Endothelial cell of umbilical vein (primary cell): ENCODE measurements at regions of chr1 and their contacts with region 1.

Region 1: GRCh38 chr1:25247024-25247828 is at the start of gene RSRP1:
- DNase-seq: peak; percentile 99
- H3K4me3 ChIP-seq: peak within 1 kb of the TSS; percentile 71 to 97 (median 86)
- H3K27ac ChIP-seq: peak within 1 kb of the TSS; percentile 89
- H3K4me1 ChIP-seq: peaks cover 20% of the 10 kb centered on the region
- H3K27me3 ChIP-seq: no peaks in the 10 kb centered on the region
- CTCF ChIP-seq: no peak
- POLR2A ChIP-seq: peak; percentile 100
- total RNA-seq, gene RSRP1: 99.4 and 102 TPM in 2 replicates

Region 2: GRCh38 chr1:25232027-25232865 is 15.0 kb before region 1 on chr1 and contains the start of gene SYF2:
- CTCF ChIA-PET with region 1: interaction called, 8 read pairs
- POLR2A ChIA-PET with region 1: interaction called, 28 read pairs
- dilution Hi-C with region 1: no loop called
- intact Hi-C with region 1: loop called (anchors 1 kb)
- DNase-seq: peak; percentile 89
- H3K4me3 ChIP-seq: peak within 1 kb of the TSS; percentile 64 to 88 (median 87)
- H3K27ac ChIP-seq: peak within 1 kb of the TSS; percentile 60
- H3K4me1 ChIP-seq: peaks cover 26% of the 10 kb centered on the region
- H3K27me3 ChIP-seq: no peaks in the 10 kb centered on the region
- CTCF ChIP-seq: no peak
- POLR2A ChIP-seq: peak; percentile 57
- total RNA-seq, gene SYF2: 38.0 and 40.2 TPM in 2 replicates

Region 3: DNA sequence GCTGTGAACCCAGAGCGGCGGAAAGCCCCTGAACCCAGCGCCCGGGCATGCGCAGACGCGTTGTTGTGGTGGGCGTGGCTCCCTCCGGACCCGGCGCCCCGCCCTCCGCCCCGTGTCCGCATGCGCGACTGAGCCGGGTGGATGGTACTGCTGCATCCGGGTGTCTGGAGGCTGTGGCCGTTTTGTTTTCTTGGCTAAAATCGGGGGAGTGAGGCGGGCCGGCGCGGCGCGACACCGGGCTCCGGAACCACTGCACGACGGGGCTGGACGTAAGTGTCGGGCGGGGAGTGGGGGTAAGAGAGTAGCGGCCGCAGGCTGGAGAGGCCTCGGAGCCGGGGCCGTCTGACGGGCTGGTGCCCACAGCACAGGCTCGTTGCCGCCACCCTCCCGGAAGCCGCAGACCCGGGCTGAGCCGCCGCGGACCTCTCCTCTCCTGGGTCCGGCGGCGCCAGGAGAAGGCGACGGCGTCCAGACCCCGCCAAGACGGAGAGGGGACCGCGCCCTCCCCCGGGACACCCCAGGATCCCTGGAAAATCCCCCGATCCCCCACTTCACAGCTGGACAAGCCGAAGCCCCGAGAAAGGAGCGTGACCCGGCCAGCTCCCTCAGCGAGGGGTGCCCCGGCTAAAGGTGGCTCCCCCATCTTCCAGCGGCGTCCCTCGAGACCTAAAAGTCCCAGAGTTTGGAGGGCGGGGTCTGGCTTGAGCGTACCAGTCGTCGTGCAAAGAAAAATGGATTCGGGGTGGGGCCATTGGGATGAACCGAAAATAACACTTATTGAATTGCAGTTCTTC is 91.2 kb after region 1 on chr1 and contains the start of gene TMEM50A:
- CTCF ChIA-PET with region 1: no interaction called
- POLR2A ChIA-PET with region 1: no interaction called
- dilution Hi-C with region 1: no loop called
- intact Hi-C with region 1: loop called (anchors 5 kb)
- DNase-seq: peak; percentile 93
- H3K4me3 ChIP-seq: peak within 1 kb of the TSS; percentile 74 to 97 (median 85)
- H3K27ac ChIP-seq: peak within 1 kb of the TSS; percentile 91
- H3K4me1 ChIP-seq: peaks cover 18% of the 10 kb centered on the region
- H3K27me3 ChIP-seq: no peaks in the 10 kb centered on the region
- CTCF ChIP-seq: no peak
- POLR2A ChIP-seq: peak; percentile 45
- total RNA-seq, gene TMEM50A: 130 and 140 TPM in 2 replicates

Region 4: GRCh38 chr1:25476186-25477097 is 229.2 kb after region 1 on chr1:
- CTCF ChIA-PET with region 1: no interaction called
- POLR2A ChIA-PET with region 1: no interaction called
- dilution Hi-C with region 1: no loop called
- intact Hi-C with region 1: loop called (anchors 5 kb)
- DNase-seq: no peak
- H3K4me3 ChIP-seq: no peak overlapping the region
- H3K27ac ChIP-seq: no peak overlapping the region
- H3K4me1 ChIP-seq: no peaks in the 10 kb centered on the region
- H3K27me3 ChIP-seq: no peaks in the 10 kb centered on the region
- CTCF ChIP-seq: no peak
- POLR2A ChIP-seq: no peak

Region 5: DNA sequence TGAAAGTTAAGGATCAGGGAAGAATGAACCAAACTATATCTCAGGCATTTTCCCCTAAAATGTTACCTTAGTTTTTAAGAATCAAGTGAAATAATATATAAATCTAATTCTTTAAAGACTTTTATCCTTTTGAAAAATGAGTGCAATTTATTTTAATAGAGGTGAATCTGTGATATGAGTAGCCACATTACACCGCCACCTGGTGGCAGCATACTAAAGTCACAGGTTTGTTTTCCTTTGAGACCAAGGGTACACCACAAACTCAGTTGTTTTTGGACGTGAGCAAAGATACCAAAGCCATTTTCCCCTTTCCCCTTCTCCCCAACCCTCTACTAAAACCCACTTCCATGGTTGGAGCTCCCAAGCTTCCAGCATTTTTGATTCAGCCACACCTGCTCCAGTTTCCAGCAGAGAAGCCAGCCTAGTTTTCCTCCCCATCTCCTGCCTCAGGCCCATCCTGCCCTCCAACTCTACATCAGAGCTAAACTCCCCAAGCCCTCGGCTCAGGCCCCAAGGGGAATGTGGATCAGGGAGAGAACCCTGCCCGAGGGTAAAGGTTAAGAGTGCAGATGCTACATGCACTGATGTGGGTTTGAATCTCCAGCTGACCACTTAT is 273.3 kb after region 1 on chr1:
- CTCF ChIA-PET with region 1: no interaction called
- POLR2A ChIA-PET with region 1: no interaction called
- dilution Hi-C with region 1: no loop called
- intact Hi-C with region 1: loop called (anchors 5 kb)
- DNase-seq: peak; percentile 57
- H3K4me3 ChIP-seq: no peak overlapping the region
- H3K27ac ChIP-seq: no peak overlapping the region
- H3K4me1 ChIP-seq: no peaks in the 10 kb centered on the region
- H3K27me3 ChIP-seq: peaks cover 0 to 2% of the 10 kb centered on the region in 2 experiments
- CTCF ChIP-seq: peak; percentile 61 to 67
- POLR2A ChIP-seq: no peak